ENCODE measurements at regions of chr1 and their contacts with region 1.

Region 1: GRCh38 chr1:45512641-45513054 is 9.0 kb downstream of the PRDX1 start:
- DNase-seq: peak; percentile 25 to 80 (median 40)
- ATAC-seq: peak; percentile 41
- H3K4me3 ChIP-seq: no peak overlapping the region
- H3K4me3 Mint-ChIP-seq: no peak overlapping the region
- H3K27ac ChIP-seq: no peak overlapping the region
- H3K27ac Mint-ChIP-seq: peak overlapping the region; percentile 69
- H3K4me1 ChIP-seq: no peaks in the 10 kb centered on the region
- H3K4me1 Mint-ChIP-seq: peaks cover 8% of the 10 kb centered on the region
- H3K27me3 ChIP-seq: no peaks in the 10 kb centered on the region
- H3K27me3 Mint-ChIP-seq: no peaks in the 10 kb centered on the region
- CTCF ChIP-seq: peak; percentile 68

Region 2: GRCh38 chr1:45550401-45551351 is 38.0 kb after region 1 on chr1 and contains the start of gene AKR1A1:
- CTCF ChIA-PET with region 1: interaction called, 20 read pairs
- POLR2A ChIA-PET with region 1: interaction called, 10 read pairs
- intact Hi-C with region 1: no loop called
- DNase-seq: peak; percentile 70 to 94 (median 84)
- ATAC-seq: peak; percentile 95
- H3K4me3 ChIP-seq: peak within 1 kb of the TSS; percentile 73
- H3K4me3 Mint-ChIP-seq: peak within 1 kb of the TSS; percentile 98
- H3K27ac ChIP-seq: peak within 1 kb of the TSS; percentile 85 to 90
- H3K27ac Mint-ChIP-seq: peak within 1 kb of the TSS; percentile 89
- H3K4me1 ChIP-seq: peaks cover 27% of the 10 kb centered on the region
- H3K4me1 Mint-ChIP-seq: peaks cover 26% of the 10 kb centered on the region
- H3K27me3 ChIP-seq: no peaks in the 10 kb centered on the region
- H3K27me3 Mint-ChIP-seq: no peaks in the 10 kb centered on the region
- CTCF ChIP-seq: no peak
- total RNA-seq, gene AKR1A1: 25.3 to 31.0 TPM

Region 3: DNA sequence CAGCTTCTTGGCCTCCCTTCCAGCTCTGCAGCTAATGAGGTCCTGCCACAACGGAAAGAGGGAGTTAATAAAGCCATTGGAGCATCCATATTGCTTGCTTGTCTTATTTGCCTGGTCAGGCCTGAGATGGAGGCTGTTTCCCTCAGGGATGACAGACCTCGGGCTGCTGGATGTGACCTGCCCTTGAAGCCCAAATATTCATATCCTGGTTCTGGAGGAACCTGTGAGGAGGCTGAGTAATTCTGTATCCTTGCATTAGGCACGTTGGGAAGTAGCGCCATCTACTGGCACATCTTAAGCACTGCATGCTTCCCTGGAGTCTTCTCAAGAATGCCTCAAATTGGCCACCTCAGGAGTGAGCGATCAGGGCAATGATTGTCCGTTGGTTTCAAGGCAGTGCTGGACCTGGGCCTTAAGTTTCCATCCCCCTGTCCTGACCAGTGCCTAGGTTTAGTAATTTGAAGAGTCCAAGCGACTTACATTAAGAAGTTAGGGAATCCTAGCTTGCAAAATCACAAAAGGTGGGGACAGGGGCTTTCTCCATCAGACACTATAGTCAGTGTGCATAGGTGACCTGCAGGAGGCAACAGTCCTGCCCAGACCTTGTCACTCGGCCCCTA is 57.4 kb after region 1 on chr1:
- CTCF ChIA-PET with region 1: interaction called, 50 read pairs
- POLR2A ChIA-PET with region 1: interaction called, 8 read pairs
- intact Hi-C with region 1: loop called (anchors 1 kb)
- DNase-seq: peak; percentile 55 to 87 (median 60)
- ATAC-seq: peak; percentile 99
- H3K4me3 ChIP-seq: no peak overlapping the region
- H3K4me3 Mint-ChIP-seq: no peak overlapping the region
- H3K27ac ChIP-seq: no peak overlapping the region
- H3K27ac Mint-ChIP-seq: no peak overlapping the region
- H3K4me1 ChIP-seq: peaks cover 2% of the 10 kb centered on the region
- H3K4me1 Mint-ChIP-seq: peaks cover 5% of the 10 kb centered on the region
- H3K27me3 ChIP-seq: no peaks in the 10 kb centered on the region
- H3K27me3 Mint-ChIP-seq: no peaks in the 10 kb centered on the region
- CTCF ChIP-seq: peak; percentile 95

Region 4: GRCh38 chr1:45884700-45885099 is 372.1 kb after region 1 on chr1:
- CTCF ChIA-PET with region 1: no interaction called
- POLR2A ChIA-PET with region 1: no interaction called
- intact Hi-C with region 1: loop called in 1 of 2 experiments (anchors 10 kb)
- DNase-seq: no peak
- ATAC-seq: no peak
- H3K4me3 ChIP-seq: no peak overlapping the region
- H3K4me3 Mint-ChIP-seq: no peak overlapping the region
- H3K27ac ChIP-seq: no peak overlapping the region
- H3K27ac Mint-ChIP-seq: no peak overlapping the region
- H3K4me1 ChIP-seq: no peaks in the 10 kb centered on the region
- H3K4me1 Mint-ChIP-seq: no peaks in the 10 kb centered on the region
- H3K27me3 ChIP-seq: no peaks in the 10 kb centered on the region
- H3K27me3 Mint-ChIP-seq: no peaks in the 10 kb centered on the region
- CTCF ChIP-seq: no peak

Measured in CD4-positive, alpha-beta T cell (primary cell).